B cell (primary cell): ENCODE measurements at regions of chr7 and their contacts with region 1.

Region 1: DNA sequence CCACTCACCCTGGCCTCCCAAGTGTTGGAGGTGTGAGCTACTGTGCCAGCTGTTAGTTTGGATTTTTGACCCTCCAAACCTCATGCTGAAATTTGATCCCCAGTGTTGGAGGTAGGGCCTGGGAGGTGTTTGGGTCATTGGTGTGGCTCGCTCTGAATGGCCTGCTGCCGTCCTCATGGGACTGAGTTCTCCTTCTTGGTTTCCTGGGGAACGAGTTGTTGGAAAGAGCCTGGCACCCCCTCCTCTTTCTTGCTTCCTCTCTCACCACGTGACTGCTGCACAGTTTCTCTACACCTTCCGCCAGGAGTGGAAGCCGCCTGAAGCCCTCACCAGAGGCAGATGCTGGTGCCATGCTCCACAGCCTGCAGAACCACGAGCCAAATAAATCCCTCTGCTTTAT is 253.5 kb downstream of the PHTF2 start:
- DNase-seq: no peak
- ATAC-seq: no peak
- H3K4me3 ChIP-seq: no peak overlapping the region
- H3K4me3 Mint-ChIP-seq: no peak overlapping the region
- H3K27ac ChIP-seq: no peak overlapping the region
- H3K27ac Mint-ChIP-seq: no peak overlapping the region
- H3K4me1 ChIP-seq: no peaks in the 10 kb centered on the region
- H3K4me1 Mint-ChIP-seq: no peaks in the 10 kb centered on the region
- H3K27me3 ChIP-seq: no peaks in the 10 kb centered on the region
- H3K27me3 Mint-ChIP-seq: peaks cover 10% of the 10 kb centered on the region
- CTCF ChIP-seq: no peak

Region 2: DNA sequence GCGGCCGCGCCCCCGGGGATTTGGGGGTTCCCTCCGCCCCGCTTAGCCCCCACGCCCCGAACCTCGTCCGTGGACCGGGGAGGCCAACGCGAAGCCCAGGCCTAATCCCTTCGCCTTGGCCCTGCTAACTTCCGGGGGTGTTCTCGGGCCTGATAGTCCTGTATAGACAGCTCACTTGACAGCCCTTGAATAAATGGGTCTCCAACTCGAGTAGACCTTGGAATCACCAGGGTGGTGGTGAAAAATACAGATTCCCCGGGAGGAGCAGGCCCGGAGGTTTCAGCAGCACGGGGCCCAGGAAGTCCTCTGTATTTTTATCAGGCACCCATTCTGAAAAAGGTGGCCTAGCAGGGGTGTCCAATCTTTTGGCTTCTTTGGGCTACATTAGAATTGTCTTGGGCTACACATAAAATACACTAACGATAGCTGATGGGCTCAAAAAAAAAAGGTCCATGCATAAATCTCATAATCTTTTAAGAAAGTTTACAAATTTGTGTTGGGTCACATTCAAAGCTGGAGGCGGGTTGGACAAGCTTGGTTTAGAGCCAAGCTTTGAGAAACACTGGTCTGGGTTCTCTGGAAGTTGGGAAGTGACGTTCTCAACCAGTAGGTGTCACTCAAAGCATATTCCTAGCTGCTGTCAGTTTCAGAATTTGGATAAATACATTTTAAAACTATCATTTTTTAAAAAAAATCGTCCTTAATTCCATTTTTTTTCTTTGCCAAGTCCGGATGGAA is 31.8 kb before region 1 on chr7:
- CTCF ChIA-PET with region 1: interaction called, 13 read pairs
- POLR2A ChIA-PET with region 1: no interaction called
- intact Hi-C with region 1: no loop called
- DNase-seq: peak; percentile 67
- ATAC-seq: peak; percentile 44
- H3K4me3 ChIP-seq: peak overlapping the region; percentile 14 to 87 (median 77)
- H3K4me3 Mint-ChIP-seq: peak overlapping the region; percentile 85
- H3K27ac ChIP-seq: peak overlapping the region in 1 of 2 donors; percentile 52
- H3K27ac Mint-ChIP-seq: peak overlapping the region; percentile 72
- H3K4me1 ChIP-seq: peaks cover 11 to 12% of the 10 kb centered on the region in 2 donors
- H3K4me1 Mint-ChIP-seq: peaks cover 15% of the 10 kb centered on the region
- H3K27me3 ChIP-seq: peaks cover 0 to 2% (median 0%) of the 10 kb centered on the region in 4 experiments
- H3K27me3 Mint-ChIP-seq: peaks cover 9% of the 10 kb centered on the region
- CTCF ChIP-seq: peak; percentile 80